ENCODE measurements at regions of chr6 and their contacts with region 1.

Region 1: DNA sequence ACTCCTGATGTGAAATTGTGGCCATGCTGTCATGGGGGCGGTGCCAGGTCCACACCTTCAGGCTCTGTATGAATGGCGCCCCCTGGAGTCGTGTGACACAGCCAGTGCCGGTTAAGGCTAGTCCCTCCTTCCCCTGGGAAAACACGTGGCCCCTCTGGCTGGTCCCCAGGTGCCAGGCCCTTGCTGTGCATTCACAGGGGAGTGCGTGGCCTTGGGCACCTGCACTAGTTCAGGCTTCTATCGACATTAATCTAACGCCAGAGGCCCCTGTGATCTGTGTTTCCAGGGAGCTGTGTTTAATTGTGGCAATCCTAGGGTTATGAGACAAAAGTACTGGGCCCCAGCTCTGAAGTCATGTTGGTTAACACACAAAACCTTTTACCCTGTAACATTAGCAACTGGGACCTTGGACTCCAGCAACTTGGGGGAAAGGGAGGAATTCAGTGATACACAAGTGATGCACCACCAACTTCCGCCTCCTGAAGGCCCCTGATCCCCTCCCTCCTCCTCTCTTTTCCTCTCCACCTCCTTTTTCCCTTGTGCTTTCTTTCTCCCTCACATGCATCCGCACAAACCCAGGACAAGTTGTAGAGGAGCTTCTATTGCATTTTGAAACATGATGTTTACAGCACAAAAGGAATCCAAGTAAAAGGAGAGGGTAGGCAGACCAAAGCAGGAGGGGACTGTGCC is 74.0 kb downstream of the SSR1 start:
- DNase-seq: peak; percentile 72
- CTCF ChIP-seq: peak; percentile 63

Region 2: GRCh38 chr6:6676910-6677441 is 562.1 kb before region 1 on chr6:
- CTCF ChIA-PET with region 1: interaction called, 16 read pairs
- POLR2A ChIA-PET with region 1: no interaction called
- DNase-seq: peak; percentile 73
- CTCF ChIP-seq: peak; percentile 90

Region 3: DNA sequence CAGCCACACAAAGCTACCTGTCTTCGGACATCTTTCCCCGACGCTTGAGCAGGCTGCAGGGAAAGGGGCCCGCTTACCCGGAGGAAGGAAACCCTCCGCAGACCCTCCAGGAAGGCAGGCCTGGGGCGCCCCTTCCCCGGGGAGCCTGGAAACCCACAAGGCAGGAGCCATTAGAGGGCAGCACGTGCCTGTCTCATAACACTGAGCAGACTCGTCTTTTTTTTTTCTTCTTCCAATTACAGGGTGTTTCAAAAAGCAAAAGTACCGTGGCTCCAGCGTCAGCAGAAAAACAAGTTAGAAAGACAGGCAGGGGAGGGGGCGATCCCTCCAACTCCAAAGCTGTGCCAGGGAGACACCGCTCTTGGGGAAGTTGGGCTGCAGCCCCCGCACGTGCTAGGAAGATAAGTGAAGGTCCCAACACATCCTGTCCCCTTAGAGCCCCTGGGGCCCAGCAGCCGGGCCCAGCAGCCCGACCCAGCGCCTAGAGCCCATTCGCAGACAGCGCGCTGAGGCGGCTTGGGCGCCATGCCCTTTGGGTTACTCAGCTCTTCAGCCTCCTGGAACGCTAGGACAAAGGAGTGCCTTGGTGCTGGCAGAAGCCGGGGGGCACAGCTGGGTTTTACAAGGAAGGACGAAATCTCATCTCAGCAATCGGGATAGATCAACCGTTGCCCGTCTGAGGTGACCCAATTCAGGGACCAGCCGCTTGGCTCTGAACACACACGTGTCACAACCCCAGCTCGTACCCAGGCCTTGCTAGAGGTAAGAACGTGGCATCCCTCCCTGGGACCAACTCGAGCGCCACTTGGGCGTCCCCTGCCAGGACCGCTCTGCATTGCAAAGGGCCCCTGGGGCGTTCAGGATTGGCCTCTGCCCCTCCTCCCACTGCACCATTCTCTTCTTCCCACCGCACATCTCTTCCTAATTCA is 514.2 kb before region 1 on chr6:
- CTCF ChIA-PET with region 1: interaction called, 24 read pairs
- POLR2A ChIA-PET with region 1: no interaction called
- DNase-seq: peak; percentile 79
- CTCF ChIP-seq: peak; percentile 72

Region 4: GRCh38 chr6:6788394-6789020 is 450.5 kb before region 1 on chr6:
- CTCF ChIA-PET with region 1: interaction called, 10 read pairs
- POLR2A ChIA-PET with region 1: no interaction called
- DNase-seq: no peak
- CTCF ChIP-seq: peak; percentile 41

Region 5: GRCh38 chr6:7254980-7255835 is 16.2 kb after region 1 on chr6:
- CTCF ChIA-PET with region 1: interaction called, 58 read pairs
- POLR2A ChIA-PET with region 1: no interaction called
- DNase-seq: no peak
- CTCF ChIP-seq: no peak

Measured in GM10248 (cell line).